Lower leg skin (tissue), 4 donors: ENCODE measurements at regions of chr6 and their contacts with region 1.

Region 1: GRCh38 chr6:142146828-142147662 is at the starts of genes NMBR and VTA1:
- DNase-seq: peak; percentile 97 to 99
- H3K4me3 ChIP-seq: peak within 1 kb of the TSS; percentile 85
- CTCF ChIP-seq: peak in 1 of 3 donors; percentile 65
- POLR2A ChIP-seq: no peak
- total RNA-seq, gene NMBR: not detected
- total RNA-seq, gene VTA1: 40.9 to 54.5 (median 49.5) TPM

Region 2: DNA sequence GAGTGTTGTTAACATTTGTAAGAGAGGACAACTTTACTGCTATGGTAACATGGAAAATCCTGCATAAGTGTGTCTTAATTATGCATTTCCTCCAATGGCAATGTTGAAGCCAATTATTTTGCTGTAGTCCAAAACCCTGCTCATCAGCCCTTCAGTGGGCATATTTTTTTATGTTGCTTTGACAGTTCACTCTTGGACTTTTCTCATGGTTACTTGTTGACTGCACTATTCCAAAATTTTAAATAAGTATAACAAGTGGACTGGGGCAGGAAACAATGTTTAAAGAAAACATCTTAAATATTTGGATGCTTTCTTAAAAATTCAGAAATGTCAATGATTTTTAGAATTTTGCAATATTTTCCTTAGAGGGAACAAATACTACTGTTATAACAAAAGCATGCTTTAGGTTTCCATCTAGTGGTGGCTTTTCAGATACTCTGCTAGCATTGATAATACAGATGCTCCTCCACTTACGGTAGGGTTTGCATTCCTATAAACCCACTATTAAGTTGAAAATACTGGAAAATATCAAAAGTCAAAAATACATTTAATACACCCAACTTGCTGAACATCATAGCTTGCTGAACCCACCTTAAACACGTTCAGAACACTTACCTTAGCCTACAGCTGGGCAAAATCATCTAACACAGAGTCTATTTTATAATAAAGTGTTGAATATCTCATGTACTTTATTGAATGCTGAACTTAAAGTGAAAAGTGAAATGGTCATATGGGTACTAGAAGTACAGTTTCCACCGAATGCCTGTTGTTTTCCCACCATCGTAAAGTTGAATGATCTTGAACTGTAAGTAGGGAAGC is 241.2 kb after region 1 on chr6:
- intact Hi-C with region 1: loop called (anchors 10 kb)
- DNase-seq: no peak
- H3K4me3 ChIP-seq: no peak overlapping the region
- CTCF ChIP-seq: no peak
- POLR2A ChIP-seq: no peak

Region 3: DNA sequence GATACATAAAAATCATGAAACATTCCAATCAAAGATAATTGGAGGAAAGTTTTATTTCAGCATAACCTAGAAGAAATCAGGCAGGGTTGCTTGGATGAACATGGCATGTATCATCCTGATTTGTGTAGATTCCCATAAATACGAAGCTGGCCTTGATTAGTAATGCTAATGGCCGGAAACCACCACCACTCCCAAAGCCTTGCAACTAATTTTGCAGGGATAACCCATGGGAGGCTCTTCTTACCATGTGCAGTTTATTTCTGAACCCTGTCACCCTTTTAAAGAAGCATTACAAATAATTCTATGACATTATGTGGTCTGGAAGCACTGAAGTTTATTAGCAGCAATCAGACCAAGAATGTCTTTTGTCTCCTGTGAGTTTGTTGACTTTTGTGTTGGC is 994.4 kb after region 1 on chr6:
- intact Hi-C with region 1: no loop called
- DNase-seq: no peak
- H3K4me3 ChIP-seq: no peak overlapping the region
- CTCF ChIP-seq: no peak
- POLR2A ChIP-seq: no peak